Activated naive CD4-positive, alpha-beta T cell treated with anti-CD3 and anti-CD28 coated beads, Interleukin-2, amount 10 ng/mL, durations not matched to agents 7 days and 5 days (primary cell): ENCODE measurements at regions of chr10 and their contacts with region 1.

Region 1: DNA sequence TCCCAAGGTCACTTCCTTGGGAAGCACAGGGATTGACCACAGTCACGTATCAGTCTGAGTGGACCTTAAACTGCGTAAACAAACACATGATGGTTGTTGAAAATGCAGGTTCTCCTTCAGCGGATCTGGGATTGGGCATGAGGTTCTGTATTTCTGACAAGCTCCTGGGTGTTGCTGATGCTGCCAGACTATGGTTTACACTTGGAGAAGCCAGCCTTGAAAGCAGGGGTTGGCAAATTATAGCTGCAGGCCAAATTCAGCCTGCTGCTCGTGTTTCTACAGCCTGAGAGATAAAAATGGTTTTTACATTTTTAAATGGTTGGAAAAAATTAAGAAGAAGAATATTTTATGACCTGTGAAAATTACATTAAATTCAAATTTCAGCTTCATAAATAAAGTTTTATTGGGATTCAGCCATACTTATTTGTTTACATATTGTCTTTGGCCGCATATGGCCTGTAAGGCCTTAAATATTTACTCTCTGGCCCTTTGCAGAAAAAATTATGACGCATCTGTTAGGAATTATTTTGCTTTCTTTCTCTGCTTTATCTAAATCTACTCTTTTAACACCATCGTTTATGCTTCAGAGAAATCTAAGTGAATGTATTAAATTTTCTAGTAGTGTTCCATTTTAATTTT is 109.6 kb downstream of the SH2D4B start:
- DNase-seq: no peak
- H3K4me3 Mint-ChIP-seq: no peak overlapping the region
- H3K27ac Mint-ChIP-seq: no peak overlapping the region
- H3K4me1 Mint-ChIP-seq: no peaks in the 10 kb centered on the region
- H3K27me3 Mint-ChIP-seq: peaks cover 7% of the 10 kb centered on the region

Region 2: DNA sequence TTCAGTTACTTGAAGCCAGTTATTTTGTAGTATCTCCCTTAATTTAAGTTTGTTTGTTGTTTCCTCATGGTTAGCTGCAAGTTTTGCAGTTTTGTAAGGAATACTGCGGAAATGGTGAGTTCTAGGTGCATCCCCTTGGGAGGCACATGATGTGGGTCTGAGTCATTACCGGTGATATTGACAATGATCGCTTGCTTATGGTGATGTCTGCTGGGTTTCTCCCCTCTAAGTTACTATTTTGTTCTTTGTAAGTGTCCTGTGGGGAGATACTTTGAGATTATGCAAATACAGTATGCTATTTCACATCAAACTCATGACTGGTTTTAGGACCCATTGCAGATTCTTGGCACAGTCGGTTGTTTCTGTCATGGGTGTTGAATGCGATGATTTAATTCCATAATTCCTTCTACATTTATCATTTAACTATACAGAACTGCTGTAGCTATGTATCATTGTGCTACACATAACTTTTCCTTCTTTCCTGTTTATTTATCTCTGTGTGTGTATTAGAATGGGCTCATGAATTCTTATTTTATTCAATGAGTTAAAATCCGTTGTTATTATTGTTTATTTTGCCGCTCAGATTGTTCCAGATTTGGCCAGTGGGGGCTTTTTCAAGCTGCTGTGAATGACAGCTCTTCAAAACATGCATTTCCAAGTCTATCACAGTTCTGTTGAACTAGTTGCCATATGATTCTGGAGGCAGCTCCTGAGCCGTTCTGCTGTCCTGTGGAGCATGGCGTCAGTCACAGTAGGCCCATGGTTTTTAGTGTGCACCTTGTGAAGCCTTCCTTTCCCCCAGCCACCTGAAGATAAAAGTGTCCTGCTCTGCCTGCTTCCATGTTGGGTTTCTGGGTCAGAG is 174.8 kb before region 1 on chr10:
- CTCF ChIA-PET with region 1: no interaction called
- DNase-seq: no peak
- H3K4me3 Mint-ChIP-seq: peak overlapping the region; percentile 49
- H3K27ac Mint-ChIP-seq: peak overlapping the region; percentile 85
- H3K4me1 Mint-ChIP-seq: peaks cover 88% of the 10 kb centered on the region
- H3K27me3 Mint-ChIP-seq: no peaks in the 10 kb centered on the region

Region 3: GRCh38 chr10:80567291-80567690 is 80.0 kb before region 1 on chr10:
- CTCF ChIA-PET with region 1: no interaction called
- DNase-seq: no peak
- H3K4me3 Mint-ChIP-seq: no peak overlapping the region
- H3K27ac Mint-ChIP-seq: no peak overlapping the region
- H3K4me1 Mint-ChIP-seq: no peaks in the 10 kb centered on the region
- H3K27me3 Mint-ChIP-seq: peaks cover 26% of the 10 kb centered on the region

Region 4: DNA sequence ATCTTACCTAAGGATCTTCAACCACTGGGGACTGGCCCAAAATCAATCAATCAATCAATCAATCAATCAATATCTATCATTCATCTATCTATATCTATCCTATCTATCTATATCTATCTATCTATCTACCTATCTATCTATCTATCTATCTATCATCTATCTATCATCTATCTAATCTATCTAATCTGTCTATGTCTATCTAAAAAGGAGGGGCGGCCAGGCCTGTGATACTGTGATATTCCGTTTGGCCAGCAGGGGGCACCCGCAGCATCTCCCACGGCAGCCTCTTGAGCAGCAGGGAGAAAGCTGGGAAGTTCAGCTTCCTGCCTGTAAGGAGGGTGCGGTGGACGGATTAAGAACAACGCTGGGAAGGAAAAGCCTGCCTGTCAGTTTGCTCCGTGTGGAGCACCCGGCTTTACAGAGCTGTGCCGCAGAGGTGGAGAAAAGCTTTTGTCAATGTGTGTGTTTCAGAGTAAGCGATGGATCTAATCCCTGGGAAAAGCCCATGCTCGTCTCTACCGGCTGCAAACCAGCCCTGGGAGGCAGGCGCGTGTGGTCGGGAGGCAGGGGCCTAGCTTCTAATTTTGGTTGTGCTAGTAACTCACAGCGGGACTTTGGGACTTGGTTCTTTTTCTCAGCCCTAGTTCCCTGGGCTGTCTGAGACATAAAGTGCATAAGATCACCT is 15.4 kb after region 1 on chr10:
- CTCF ChIA-PET with region 1: interaction called, 33 read pairs
- DNase-seq: peak; percentile 75
- H3K4me3 Mint-ChIP-seq: no peak overlapping the region
- H3K27ac Mint-ChIP-seq: no peak overlapping the region
- H3K4me1 Mint-ChIP-seq: peaks cover 4% of the 10 kb centered on the region
- H3K27me3 Mint-ChIP-seq: peaks cover 34% of the 10 kb centered on the region

Region 5: GRCh38 chr10:80684259-80684658 is 37.0 kb after region 1 on chr10:
- CTCF ChIA-PET with region 1: no interaction called
- DNase-seq: no peak
- H3K4me3 Mint-ChIP-seq: no peak overlapping the region
- H3K27ac Mint-ChIP-seq: no peak overlapping the region
- H3K4me1 Mint-ChIP-seq: no peaks in the 10 kb centered on the region
- H3K27me3 Mint-ChIP-seq: no peaks in the 10 kb centered on the region